ENCODE measurements at regions of chr2 and their contacts with region 1.

Region 1: GRCh38 chr2:41782306-41783158 is 265.3 kb upstream of the PKDCC start:
- DNase-seq: peak; percentile 50
- H3K4me3 Mint-ChIP-seq: no peak overlapping the region
- H3K27ac Mint-ChIP-seq: no peak overlapping the region
- H3K4me1 Mint-ChIP-seq: no peaks in the 10 kb centered on the region
- H3K27me3 Mint-ChIP-seq: peaks cover 7% of the 10 kb centered on the region

Region 2: DNA sequence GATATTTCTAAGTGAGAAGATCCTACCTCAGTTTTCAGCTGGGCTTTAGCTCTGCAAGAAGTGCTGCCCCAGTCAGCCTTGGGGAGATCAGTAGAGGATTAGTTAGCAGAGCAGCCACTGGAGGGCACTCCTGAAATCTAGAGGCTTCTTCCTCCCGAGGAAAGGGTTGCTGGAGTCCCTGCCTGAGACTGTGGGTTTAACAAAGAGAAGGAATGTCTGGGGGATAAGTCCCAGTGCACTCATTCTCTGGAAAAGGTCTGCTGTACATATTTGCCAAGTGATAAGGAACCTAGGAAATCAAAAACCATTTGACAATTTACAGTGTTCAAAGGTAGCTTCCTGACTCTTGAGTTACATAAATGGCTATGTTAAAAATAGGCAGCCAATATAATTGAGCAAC is 1537.9 kb before region 1 on chr2:
- CTCF ChIA-PET with region 1: interaction called, 4 read pairs
- intact Hi-C with region 1: loop called (anchors 5 kb)
- DNase-seq: peak; percentile 35
- H3K4me3 Mint-ChIP-seq: no peak overlapping the region
- H3K27ac Mint-ChIP-seq: no peak overlapping the region
- H3K4me1 Mint-ChIP-seq: no peaks in the 10 kb centered on the region
- H3K27me3 Mint-ChIP-seq: peaks cover 5% of the 10 kb centered on the region

Region 3: GRCh38 chr2:40554668-40555285 is 1227.8 kb before region 1 on chr2:
- CTCF ChIA-PET with region 1: no interaction called
- intact Hi-C with region 1: loop called (anchors 5 kb)
- DNase-seq: peak; percentile 71
- H3K4me3 Mint-ChIP-seq: no peak overlapping the region
- H3K27ac Mint-ChIP-seq: no peak overlapping the region
- H3K4me1 Mint-ChIP-seq: no peaks in the 10 kb centered on the region
- H3K27me3 Mint-ChIP-seq: peaks cover 3% of the 10 kb centered on the region

Region 4: DNA sequence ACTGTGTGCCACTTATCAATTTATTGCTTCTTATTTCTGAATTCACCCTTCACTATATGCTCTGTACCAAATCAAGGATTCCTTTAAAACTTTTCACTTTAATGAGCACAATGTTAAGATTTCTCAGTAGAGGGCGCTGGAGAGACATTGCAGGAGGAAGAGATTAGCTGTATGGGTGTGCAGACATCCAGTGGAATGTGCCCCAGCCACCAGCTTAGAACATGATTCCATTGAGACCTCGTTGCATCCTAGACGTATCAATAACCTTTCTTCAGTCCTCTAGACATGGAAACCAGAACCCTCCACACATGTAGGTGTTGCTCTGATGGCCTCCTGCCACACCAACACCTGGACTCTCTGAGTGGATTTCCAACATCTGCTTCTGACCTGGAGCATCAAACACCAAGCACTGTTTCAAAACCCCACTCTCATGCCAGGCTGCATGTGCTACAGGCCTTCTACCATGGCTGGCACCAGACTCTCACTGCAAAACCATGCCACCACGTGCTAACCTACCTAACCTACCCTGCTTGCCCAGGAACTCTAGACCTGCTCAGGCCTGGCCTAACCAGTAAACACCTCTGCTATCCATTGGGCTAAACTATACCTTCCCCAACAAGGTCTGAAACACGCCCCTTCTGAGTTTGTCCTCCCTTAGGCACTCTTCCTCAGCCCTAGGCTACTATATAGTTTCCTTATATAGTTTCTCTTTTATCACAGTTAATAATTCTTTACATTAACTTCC is 367.9 kb before region 1 on chr2:
- CTCF ChIA-PET with region 1: interaction called, 3 read pairs
- intact Hi-C with region 1: loop called (anchors 1 kb)
- DNase-seq: peak; percentile 4
- H3K4me3 Mint-ChIP-seq: no peak overlapping the region
- H3K27ac Mint-ChIP-seq: no peak overlapping the region
- H3K4me1 Mint-ChIP-seq: no peaks in the 10 kb centered on the region
- H3K27me3 Mint-ChIP-seq: peaks cover 3% of the 10 kb centered on the region

Region 5: GRCh38 chr2:41709702-41710599 is 72.6 kb before region 1 on chr2:
- CTCF ChIA-PET with region 1: no interaction called
- intact Hi-C with region 1: loop called (anchors 5 kb)
- DNase-seq: peak; percentile 14
- H3K4me3 Mint-ChIP-seq: no peak overlapping the region
- H3K27ac Mint-ChIP-seq: no peak overlapping the region
- H3K4me1 Mint-ChIP-seq: peaks cover 5% of the 10 kb centered on the region
- H3K27me3 Mint-ChIP-seq: no peaks in the 10 kb centered on the region

Region 6: GRCh38 chr2:41741951-41742595 is 40.5 kb before region 1 on chr2:
- CTCF ChIA-PET with region 1: no interaction called
- intact Hi-C with region 1: no loop called
- DNase-seq: no peak
- H3K4me3 Mint-ChIP-seq: no peak overlapping the region
- H3K27ac Mint-ChIP-seq: no peak overlapping the region
- H3K4me1 Mint-ChIP-seq: no peaks in the 10 kb centered on the region
- H3K27me3 Mint-ChIP-seq: peaks cover 18% of the 10 kb centered on the region